ENCODE measurements at regions of chr2 and their contacts with region 1.

Region 1: DNA sequence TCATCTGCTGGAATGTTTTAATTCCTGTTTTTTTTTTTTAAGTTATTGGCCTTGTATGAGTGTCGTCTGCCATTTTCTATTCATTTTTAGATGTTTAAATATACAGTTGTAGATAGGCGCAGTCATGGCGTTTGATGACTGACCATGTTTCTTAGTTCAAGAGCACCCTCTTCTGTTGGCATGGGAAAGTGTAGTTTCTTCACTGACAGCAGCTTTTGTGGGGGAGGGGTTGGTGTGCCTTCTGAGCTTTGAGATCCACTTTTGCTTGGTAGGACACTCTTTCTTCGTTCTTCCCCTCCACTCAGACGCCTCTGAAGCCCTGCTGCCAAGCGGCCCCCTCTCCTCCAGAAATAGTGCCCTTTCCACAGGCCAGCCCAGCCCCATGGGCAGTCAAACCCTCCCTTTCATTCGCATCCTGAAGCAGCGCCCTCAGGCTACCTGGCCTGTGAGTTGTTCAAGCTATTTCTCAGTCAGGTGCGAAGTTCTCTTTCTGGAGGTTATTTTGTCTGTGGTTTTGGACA is 492.0 kb downstream of the TNS1 start:
- DNase-seq: peak; percentile 69
- ATAC-seq: peak; percentile 98
- H3K4me3 ChIP-seq: no peak overlapping the region
- H3K27ac ChIP-seq: no peak overlapping the region
- H3K4me1 ChIP-seq: no peaks in the 10 kb centered on the region
- H3K27me3 ChIP-seq: no peaks in the 10 kb centered on the region; a peak in 1 of 5 replicates
- CTCF ChIP-seq: peak; percentile 91
- EP300 ChIP-seq: no peak
- POLR2A ChIP-seq: no peak
- RAD21 ChIP-seq: peak; percentile 88

Region 2: DNA sequence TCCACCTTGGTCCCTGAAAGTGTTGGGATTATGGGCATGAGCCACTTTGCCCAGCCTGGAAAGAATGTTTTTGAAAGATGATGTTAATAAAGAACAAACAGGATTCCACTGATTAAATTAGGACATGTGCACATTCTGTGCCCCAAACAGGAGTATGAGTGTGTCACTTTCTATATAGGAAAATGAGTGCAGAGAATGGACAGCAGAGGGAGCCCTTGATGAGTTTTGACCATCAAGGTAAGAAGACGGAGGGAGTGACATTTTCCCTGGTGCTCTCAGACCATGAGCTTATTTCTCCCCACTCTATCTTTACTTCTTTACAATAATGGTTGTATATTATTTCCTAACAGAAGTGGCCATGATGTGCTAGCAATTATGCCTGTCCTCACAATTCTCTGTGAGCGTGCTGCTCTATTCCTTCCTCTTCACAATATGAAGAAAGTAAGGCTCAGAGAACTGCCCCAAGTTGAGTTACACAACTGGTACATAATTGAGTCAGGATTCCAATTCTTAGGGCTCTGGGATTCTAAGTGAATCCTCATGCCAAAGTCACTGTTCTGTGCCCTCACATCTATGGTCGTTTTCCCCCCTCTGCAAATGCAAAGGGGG is 991.6 kb before region 1 on chr2:
- CTCF ChIA-PET with region 1: no interaction called
- POLR2A ChIA-PET with region 1: no interaction called
- in situ Hi-C with region 1: loop called (anchors 25 kb)
- intact Hi-C with region 1: loop called (anchors 5 kb)
- DNase-seq: peak; percentile 82
- ATAC-seq: peak; percentile 84
- H3K4me3 ChIP-seq: no peak overlapping the region
- H3K27ac ChIP-seq: no peak overlapping the region
- H3K4me1 ChIP-seq: peaks cover 28% of the 10 kb centered on the region
- H3K27me3 ChIP-seq: no peaks in the 10 kb centered on the region
- CTCF ChIP-seq: peak; percentile 92
- EP300 ChIP-seq: no peak
- POLR2A ChIP-seq: no peak
- RAD21 ChIP-seq: peak; percentile 93

Region 3: DNA sequence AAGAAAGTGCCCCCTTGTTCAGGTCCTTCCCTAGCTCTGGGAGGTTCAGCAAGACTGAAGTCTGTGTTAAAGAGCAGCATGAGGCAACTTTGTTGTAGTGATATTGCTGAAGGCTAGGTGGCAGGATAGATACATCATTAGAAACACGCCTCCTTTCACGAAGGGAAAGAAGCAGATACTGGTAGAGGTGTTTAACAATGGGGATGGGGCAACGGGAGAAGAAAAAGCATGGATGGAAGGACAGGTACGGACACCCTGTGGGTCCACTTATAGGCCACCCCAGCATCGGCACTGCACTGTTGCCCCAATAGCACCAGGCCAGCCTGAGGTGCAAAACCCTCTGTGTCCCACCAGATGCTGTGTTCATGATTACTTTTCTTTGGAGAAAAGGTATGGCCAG is 811.9 kb before region 1 on chr2:
- CTCF ChIA-PET with region 1: interaction called, 19 read pairs
- POLR2A ChIA-PET with region 1: no interaction called
- in situ Hi-C with region 1: loop called (anchors 5 kb)
- intact Hi-C with region 1: loop called (anchors 1 kb)
- DNase-seq: peak; percentile 61
- ATAC-seq: peak; percentile 86
- H3K4me3 ChIP-seq: no peak overlapping the region
- H3K27ac ChIP-seq: no peak overlapping the region
- H3K4me1 ChIP-seq: no peaks in the 10 kb centered on the region
- H3K27me3 ChIP-seq: peaks cover 5 to 60% of the 10 kb centered on the region in 2 experiments; a peak in 4 of 5 replicates
- CTCF ChIP-seq: peak; percentile 92
- EP300 ChIP-seq: no peak
- POLR2A ChIP-seq: no peak
- RAD21 ChIP-seq: peak; percentile 80

Region 4: GRCh38 chr2:217040099-217040498 is 470.7 kb before region 1 on chr2:
- CTCF ChIA-PET with region 1: no interaction called
- POLR2A ChIA-PET with region 1: no interaction called
- in situ Hi-C with region 1: loop called (anchors 5 kb)
- intact Hi-C with region 1: no loop called
- DNase-seq: no peak
- ATAC-seq: no peak
- H3K4me3 ChIP-seq: no peak overlapping the region
- H3K27ac ChIP-seq: no peak overlapping the region
- H3K4me1 ChIP-seq: no peaks in the 10 kb centered on the region
- H3K27me3 ChIP-seq: peaks cover 0 to 3% of the 10 kb centered on the region in 2 experiments; a peak in 1 of 5 replicates
- CTCF ChIP-seq: no peak
- EP300 ChIP-seq: no peak
- POLR2A ChIP-seq: no peak
- RAD21 ChIP-seq: no peak

Region 5: GRCh38 chr2:217166241-217166850 is 344.5 kb before region 1 on chr2:
- CTCF ChIA-PET with region 1: interaction called, 7 read pairs
- POLR2A ChIA-PET with region 1: no interaction called
- in situ Hi-C with region 1: no loop called
- intact Hi-C with region 1: loop called (anchors 1 kb)
- DNase-seq: peak; percentile 46
- ATAC-seq: peak; percentile 89
- H3K4me3 ChIP-seq: no peak overlapping the region
- H3K27ac ChIP-seq: no peak overlapping the region
- H3K4me1 ChIP-seq: no peaks in the 10 kb centered on the region
- H3K27me3 ChIP-seq: peaks cover 0 to 6% of the 10 kb centered on the region in 2 experiments; a peak in 1 of 5 replicates
- CTCF ChIP-seq: peak; percentile 74
- EP300 ChIP-seq: no peak
- POLR2A ChIP-seq: no peak
- RAD21 ChIP-seq: peak; percentile 41; the same call in 1 of the 2 replicates

Region 6: GRCh38 chr2:218216674-218217359 is 706.0 kb after region 1 on chr2 and contains the start of gene ARPC2:
- CTCF ChIA-PET with region 1: no interaction called
- POLR2A ChIA-PET with region 1: no interaction called
- in situ Hi-C with region 1: no loop called
- intact Hi-C with region 1: no loop called
- DNase-seq: peak; percentile 88
- ATAC-seq: peak; percentile 95
- H3K4me3 ChIP-seq: peak within 1 kb of the TSS; percentile 87 to 96 (median 93)
- H3K27ac ChIP-seq: peak within 1 kb of the TSS; percentile 70
- H3K4me1 ChIP-seq: peaks cover 46% of the 10 kb centered on the region
- H3K27me3 ChIP-seq: no peaks in the 10 kb centered on the region; a peak in 1 of 5 replicates
- CTCF ChIP-seq: peak; percentile 34
- EP300 ChIP-seq: peak in 1 of 2 experiments; percentile 40; a peak in 2 of 4 replicates
- POLR2A ChIP-seq: peak; percentile 81 to 90
- RAD21 ChIP-seq: peak; percentile 17; the same call in 1 of the 2 replicates
- total RNA-seq, gene ARPC2: 168 and 201 TPM in 2 replicates